ENCODE measurements at regions of chr6 and their contacts with region 1.

Region 1: DNA sequence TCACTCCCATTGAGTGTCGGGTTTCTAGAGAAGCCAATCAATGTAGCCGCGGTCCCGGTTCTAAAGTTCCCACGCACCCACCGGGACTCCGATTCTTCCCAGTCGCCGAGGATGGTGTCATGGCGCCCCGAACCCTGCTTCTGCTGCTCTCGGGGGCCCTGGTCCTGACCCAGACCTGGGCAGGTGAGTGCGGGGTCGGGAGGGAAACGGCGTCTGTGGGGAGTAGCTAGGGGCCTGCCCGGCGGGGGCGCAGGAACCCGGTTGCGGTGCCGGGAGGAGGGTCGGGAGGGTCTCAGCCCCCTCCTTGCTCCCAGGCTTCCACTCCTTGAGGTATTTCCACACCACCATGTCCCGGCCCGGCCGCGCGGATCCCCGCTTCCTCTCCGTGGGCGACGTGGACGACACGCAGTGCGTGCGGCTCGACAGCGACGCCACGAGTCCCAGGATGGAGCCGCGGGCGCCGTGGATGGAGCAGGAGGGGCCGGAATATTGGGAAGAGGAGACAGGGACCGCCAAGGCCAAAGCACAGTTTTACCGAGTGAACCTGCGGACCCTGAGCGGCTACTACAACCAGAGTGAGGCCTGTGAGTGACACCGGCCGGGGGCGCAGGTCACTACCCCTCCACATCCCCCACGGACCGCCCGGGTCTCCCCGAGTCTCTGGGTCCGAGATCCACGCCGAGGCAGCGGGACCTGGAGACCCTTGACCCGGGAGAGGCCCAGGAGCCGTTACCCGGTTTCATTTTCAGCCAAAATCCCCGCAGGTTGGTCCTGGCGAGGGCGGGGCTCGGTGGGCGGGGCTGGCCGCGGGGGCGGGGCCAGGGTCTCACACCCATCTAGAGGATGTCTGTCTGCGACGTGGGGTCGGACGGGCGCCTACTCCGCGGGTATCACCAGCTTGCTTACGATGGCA is 35.2 kb upstream of the HLA-G start:
- DNase-seq: peak in 1 of 2 experiments; percentile 69
- H3K4me3 ChIP-seq: peak overlapping the region; percentile 75
- H3K27ac ChIP-seq: peak overlapping the region; percentile 89
- H3K4me1 ChIP-seq: peaks cover 30% of the 10 kb centered on the region
- H3K27me3 ChIP-seq: no peaks in the 10 kb centered on the region
- CTCF ChIP-seq: peak; percentile 67

Region 2: DNA sequence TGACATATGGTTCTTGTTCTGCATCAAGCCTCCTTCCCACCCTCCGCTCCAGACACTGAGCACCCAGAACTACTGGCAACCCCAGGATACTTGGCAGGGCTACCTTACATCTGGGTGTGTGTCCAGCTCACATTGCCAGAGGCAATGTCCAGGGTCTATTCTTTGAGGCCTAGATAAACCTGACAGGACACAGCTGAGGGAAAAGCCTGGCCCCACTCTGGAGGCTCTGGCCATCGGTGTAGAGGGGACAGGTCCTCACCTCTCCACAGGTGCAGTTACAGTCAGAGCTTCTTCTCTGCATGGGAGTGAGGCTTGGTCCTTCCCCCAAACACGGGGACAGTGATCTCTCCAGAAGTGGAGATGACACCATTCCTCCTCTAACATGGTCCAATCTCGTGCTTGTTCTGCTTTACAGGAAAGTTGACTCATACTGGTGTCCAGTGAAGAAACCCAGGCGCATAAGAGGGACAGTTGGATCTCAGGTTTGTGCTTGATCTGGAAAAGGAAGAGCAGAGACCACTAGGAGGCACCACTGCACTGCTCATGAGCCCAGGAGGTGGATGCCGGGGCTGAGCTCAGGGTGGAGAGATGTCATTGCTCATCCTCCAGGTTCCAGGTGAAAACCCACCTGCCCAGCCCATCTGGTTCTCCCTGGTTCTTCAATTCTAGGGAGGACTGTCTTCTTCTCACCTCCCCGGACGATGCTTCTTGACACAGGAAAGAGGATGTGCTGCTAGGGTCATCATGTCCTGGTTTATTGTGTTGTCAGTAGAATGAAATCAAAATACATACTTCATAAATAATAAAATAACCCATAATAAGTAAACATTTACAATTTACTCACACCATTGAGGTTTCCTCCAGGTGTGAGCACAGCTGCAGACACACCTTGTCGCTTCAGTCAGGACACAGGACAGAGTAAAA is 54.4 kb before region 1 on chr6:
- CTCF ChIA-PET with region 1: no interaction called
- POLR2A ChIA-PET with region 1: no interaction called
- intact Hi-C with region 1: loop called (anchors 2 kb)
- DNase-seq: peak; percentile 61 to 66
- H3K4me3 ChIP-seq: no peak overlapping the region
- H3K27ac ChIP-seq: no peak overlapping the region
- H3K4me1 ChIP-seq: no peaks in the 10 kb centered on the region
- H3K27me3 ChIP-seq: no peaks in the 10 kb centered on the region
- CTCF ChIP-seq: peak; percentile 90

Region 3: GRCh38 chr6:29763491-29764289 is 28.7 kb before region 1 on chr6:
- CTCF ChIA-PET with region 1: no interaction called
- POLR2A ChIA-PET with region 1: no interaction called
- intact Hi-C with region 1: loop called (anchors 2 kb)
- DNase-seq: peak; percentile 13 to 51
- H3K4me3 ChIP-seq: no peak overlapping the region
- H3K27ac ChIP-seq: no peak overlapping the region
- H3K4me1 ChIP-seq: peaks cover 21% of the 10 kb centered on the region
- H3K27me3 ChIP-seq: no peaks in the 10 kb centered on the region
- CTCF ChIP-seq: no peak